MCF 10A (cell line): ENCODE measurements at regions of chr6 and their contacts with region 1.

Region 1: DNA sequence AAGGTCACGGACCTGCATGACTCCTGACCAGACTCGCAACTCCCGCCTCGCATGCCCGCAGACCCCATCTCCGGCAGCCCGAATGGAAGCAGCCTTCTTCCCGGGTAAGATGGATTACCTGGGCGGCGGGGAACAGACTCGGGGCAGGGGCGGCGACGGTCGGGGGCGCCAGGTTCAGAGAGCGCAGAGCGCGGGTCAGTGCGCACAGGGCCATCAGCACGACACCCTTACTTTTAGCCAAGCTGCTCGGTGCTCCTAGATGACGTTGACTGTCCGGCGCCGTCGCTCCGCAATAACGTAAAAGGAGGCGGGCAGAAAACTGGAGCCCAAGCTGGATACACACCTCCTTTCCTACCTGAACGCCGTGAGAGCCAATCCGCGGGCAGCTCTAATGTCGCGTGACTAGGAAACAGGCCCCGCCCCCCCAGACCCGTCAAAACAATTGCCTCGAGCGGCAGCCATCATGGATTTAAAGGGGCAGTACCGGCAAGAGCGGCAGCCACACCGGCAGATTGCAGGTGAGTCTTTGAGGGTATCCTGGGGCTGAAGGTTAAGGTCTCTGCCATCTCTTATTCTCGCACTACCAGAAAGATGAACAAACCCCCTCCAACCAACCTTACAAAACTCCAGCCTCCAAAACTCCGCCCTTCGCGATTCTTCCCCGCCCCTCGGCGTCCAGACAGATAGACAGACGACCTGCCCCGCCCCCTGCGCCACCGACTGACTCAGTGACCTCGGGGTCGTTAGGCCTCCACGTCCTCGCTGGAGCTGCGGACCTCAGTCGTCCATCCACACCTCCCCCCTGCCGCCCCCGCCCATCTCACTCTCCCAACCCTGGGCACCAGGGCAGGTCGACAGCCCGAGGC is at the starts of genes KLC4 and MRPL2:
- DNase-seq: peak; percentile 99
- H3K4me3 Mint-ChIP-seq: peak within 1 kb of the TSS; percentile 94
- H3K27ac Mint-ChIP-seq: peak within 1 kb of the TSS; percentile 96
- H3K4me1 Mint-ChIP-seq: peaks cover 28% of the 10 kb centered on the region
- H3K27me3 Mint-ChIP-seq: no peaks in the 10 kb centered on the region
- CTCF ChIP-seq: no peak
- total RNA-seq, gene KLC4: 17.5 and 23.4 TPM in 2 replicates
- total RNA-seq, gene MRPL2: 155 and 174 TPM in 2 replicates

Region 2: GRCh38 chr6:42928986-42929820 is 130.2 kb before region 1 on chr6 and contains the start of gene CNPY3:
- CTCF ChIA-PET with region 1: interaction called, 4 read pairs
- POLR2A ChIA-PET with region 1: interaction called, 20 read pairs
- intact Hi-C with region 1: no loop called
- DNase-seq: peak; percentile 97
- H3K4me3 Mint-ChIP-seq: peak within 1 kb of the TSS; percentile 99
- H3K27ac Mint-ChIP-seq: peak within 1 kb of the TSS; percentile 97
- H3K4me1 Mint-ChIP-seq: peaks cover 40% of the 10 kb centered on the region
- H3K27me3 Mint-ChIP-seq: no peaks in the 10 kb centered on the region
- CTCF ChIP-seq: no peak
- total RNA-seq, gene CNPY3: 21.9 and 22.5 TPM in 2 replicates

Region 3: GRCh38 chr6:43021270-43022047 is 37.9 kb before region 1 on chr6 and contains the start of gene RRP36:
- CTCF ChIA-PET with region 1: interaction called, 4 read pairs
- POLR2A ChIA-PET with region 1: interaction called, 53 read pairs
- intact Hi-C with region 1: no loop called
- DNase-seq: peak; percentile 68
- H3K4me3 Mint-ChIP-seq: peak within 1 kb of the TSS; percentile 92
- H3K27ac Mint-ChIP-seq: peak within 1 kb of the TSS; percentile 57
- H3K4me1 Mint-ChIP-seq: peaks cover 9% of the 10 kb centered on the region
- H3K27me3 Mint-ChIP-seq: no peaks in the 10 kb centered on the region
- CTCF ChIP-seq: no peak
- total RNA-seq, gene RRP36: 72.8 and 80.4 TPM in 2 replicates

Region 4: DNA sequence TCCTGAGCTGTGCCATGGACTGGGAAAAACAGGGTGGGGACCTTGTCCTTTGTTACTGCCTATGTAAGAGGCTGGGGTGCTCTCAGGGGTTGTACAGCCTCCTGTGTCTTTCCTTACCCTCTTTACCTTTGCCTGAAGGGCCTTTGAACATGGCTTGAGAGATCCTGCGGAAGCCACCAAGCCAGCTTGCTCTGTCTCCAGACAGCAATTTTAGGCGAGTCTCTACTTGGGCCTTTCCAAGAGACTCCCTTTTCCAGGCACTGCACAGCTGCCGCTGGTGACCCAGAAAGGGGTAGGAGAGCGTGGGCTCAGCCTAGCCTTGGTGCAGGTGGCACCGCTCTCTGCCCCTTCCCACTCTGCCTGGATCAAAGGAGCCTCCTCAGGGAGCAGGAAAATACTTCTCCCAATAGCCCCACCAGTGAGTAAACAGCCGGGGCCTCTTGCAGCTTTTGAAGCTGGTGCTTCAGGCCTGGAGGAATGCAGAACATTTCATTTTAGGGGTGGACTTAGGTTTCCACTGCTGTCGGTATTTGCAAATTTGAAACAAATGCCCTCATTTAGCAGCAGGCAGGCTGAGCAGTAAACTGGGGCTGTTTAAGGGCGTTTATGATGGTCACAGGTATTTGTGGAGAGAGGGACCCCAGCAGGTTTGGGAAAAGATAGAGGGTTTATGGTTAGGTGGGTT is 30.6 kb after region 1 on chr6:
- CTCF ChIA-PET with region 1: interaction called, 3 read pairs
- POLR2A ChIA-PET with region 1: interaction called, 17 read pairs
- intact Hi-C with region 1: no loop called
- DNase-seq: no peak
- H3K4me3 Mint-ChIP-seq: no peak overlapping the region
- H3K27ac Mint-ChIP-seq: peak overlapping the region; percentile 79
- H3K4me1 Mint-ChIP-seq: peaks cover 26% of the 10 kb centered on the region
- H3K27me3 Mint-ChIP-seq: no peaks in the 10 kb centered on the region
- CTCF ChIP-seq: no peak

Region 5: DNA sequence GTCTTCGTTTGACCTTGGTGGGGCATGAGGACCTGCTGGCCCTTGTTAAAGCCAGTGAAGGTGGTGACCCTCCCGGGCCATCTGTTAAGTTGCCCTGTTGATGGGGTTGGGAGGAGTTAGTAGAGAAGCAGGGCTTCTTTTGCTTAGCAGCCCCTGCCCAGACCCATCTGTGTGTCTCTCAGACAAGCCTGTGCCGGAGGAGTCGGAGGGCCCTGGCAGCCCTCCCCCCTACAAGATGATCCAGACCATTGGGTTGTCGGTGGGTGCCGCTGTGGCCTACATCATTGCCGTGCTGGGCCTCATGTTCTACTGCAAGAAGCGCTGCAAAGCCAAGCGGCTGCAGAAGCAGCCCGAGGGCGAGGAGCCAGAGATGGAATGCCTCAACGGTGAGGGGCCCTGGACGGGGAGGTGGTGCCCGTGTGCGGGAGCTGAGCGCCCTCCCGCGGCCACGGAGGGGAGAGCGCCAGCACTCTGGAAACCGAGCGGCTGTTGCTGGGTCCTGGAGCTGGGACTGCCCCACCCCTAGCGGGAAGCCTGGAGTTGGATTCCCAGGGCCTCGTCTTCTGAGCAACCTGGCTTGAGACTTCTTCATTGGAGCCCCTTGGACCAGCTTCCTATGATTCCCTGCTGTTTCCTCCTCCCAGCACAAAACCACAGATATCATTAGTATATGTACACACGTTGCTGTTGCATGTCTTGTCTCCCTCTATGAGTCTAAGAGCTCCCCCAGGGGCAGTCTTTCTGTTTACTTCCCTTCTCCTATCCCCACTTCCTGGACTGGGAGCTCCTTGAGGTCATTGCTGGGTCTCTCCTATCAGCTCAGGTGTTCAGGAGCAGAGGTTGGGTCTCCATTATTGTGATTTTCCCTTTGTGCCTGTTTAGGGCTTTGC is 84.1 kb after region 1 on chr6:
- CTCF ChIA-PET with region 1: interaction called, 12 read pairs
- POLR2A ChIA-PET with region 1: interaction called, 21 read pairs
- intact Hi-C with region 1: no loop called
- DNase-seq: peak; percentile 80
- H3K4me3 Mint-ChIP-seq: no peak overlapping the region
- H3K27ac Mint-ChIP-seq: no peak overlapping the region
- H3K4me1 Mint-ChIP-seq: peaks cover 18% of the 10 kb centered on the region
- H3K27me3 Mint-ChIP-seq: no peaks in the 10 kb centered on the region
- CTCF ChIP-seq: peak; percentile 94